Heart left ventricle (tissue), 16 donors: ENCODE measurements at regions of chr3 and their contacts with region 1.

Region 1: GRCh38 chr3:141487521-141488252 is 860 bp downstream of the RASA2 start:
- DNase-seq: peak; percentile 65 to 86 (median 74)
- ATAC-seq: peak; percentile 40 to 72 (median 66)
- H3K4me3 ChIP-seq: peak overlapping the region; percentile 80 to 98 (median 88)
- H3K27ac ChIP-seq: peak overlapping the region; percentile 81 to 97 (median 96)
- H3K4me1 ChIP-seq: peaks cover 0 to 77% (median 17%) of the 10 kb centered on the region in 12 donors
- H3K27me3 ChIP-seq: no peaks in the 10 kb centered on the region
- CTCF ChIP-seq: no peak
- POLR2A ChIP-seq: peak in 1 of 2 donors; percentile 13

Region 2: GRCh38 chr3:141243271-141243707 is 244.4 kb before region 1 on chr3:
- intact Hi-C with region 1: no loop called
- DNase-seq: peak in 2 of 5 donors; percentile 38 to 56
- ATAC-seq: peak in 3 of 4 donors; percentile 40 to 62 (median 51)
- H3K4me3 ChIP-seq: peak overlapping the region in 2 of 12 donors; percentile 27 to 32
- H3K27ac ChIP-seq: peak overlapping the region in 9 of 12 donors; percentile 67 to 96 (median 83)
- H3K4me1 ChIP-seq: peaks cover 0 to 63% (median 35%) of the 10 kb centered on the region in 12 donors
- H3K27me3 ChIP-seq: no peaks in the 10 kb centered on the region
- CTCF ChIP-seq: no peak
- POLR2A ChIP-seq: no peak

Region 3: GRCh38 chr3:141523615-141524375 is 36.1 kb after region 1 on chr3:
- intact Hi-C with region 1: loop called in 1 of 10 experiments (anchors 5 kb)
- DNase-seq: no peak
- ATAC-seq: no peak
- H3K4me3 ChIP-seq: no peak overlapping the region
- H3K27ac ChIP-seq: no peak overlapping the region
- H3K4me1 ChIP-seq: peaks cover 0 to 38% (median 2%) of the 10 kb centered on the region in 12 donors
- H3K27me3 ChIP-seq: no peaks in the 10 kb centered on the region
- CTCF ChIP-seq: no peak
- POLR2A ChIP-seq: no peak

Region 4: GRCh38 chr3:141538568-141539240 is 51.0 kb after region 1 on chr3:
- intact Hi-C with region 1: loop called in 2 of 10 experiments (anchors 5 kb)
- DNase-seq: no peak
- ATAC-seq: no peak
- H3K4me3 ChIP-seq: no peak overlapping the region
- H3K27ac ChIP-seq: peak overlapping the region in 1 of 12 donors; percentile 28
- H3K4me1 ChIP-seq: peaks cover 0 to 15% (median 0%) of the 10 kb centered on the region in 12 donors
- H3K27me3 ChIP-seq: no peaks in the 10 kb centered on the region
- CTCF ChIP-seq: no peak
- POLR2A ChIP-seq: no peak

Region 5: DNA sequence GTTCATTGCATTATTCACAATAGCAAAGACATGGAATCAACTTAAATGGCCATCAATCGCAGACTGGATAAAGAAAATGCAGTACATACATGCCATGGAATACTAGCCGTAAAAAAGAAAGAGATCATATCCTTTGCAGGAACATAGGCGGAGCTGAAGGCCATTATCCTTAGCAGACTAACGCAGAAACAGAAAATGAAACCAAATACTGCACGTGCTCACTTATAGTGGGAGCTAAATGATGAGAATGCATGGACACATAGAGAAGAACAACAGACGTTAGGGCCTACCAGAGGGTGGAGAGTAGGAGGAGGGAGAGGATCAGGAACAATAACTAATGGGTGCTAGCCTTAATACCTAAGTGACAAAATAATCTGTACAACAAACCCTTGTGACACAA is 57.0 kb after region 1 on chr3:
- intact Hi-C with region 1: loop called in 3 of 10 experiments (anchors 5 kb)
- DNase-seq: no peak
- ATAC-seq: peak in 2 of 4 donors; percentile 49 to 71
- H3K4me3 ChIP-seq: no peak overlapping the region
- H3K27ac ChIP-seq: peak overlapping the region in 1 of 12 donors; percentile 50
- H3K4me1 ChIP-seq: peaks cover 0 to 17% (median 0%) of the 10 kb centered on the region in 12 donors
- H3K27me3 ChIP-seq: no peaks in the 10 kb centered on the region
- CTCF ChIP-seq: no peak
- POLR2A ChIP-seq: no peak